PC-9 (cell line): ENCODE measurements at regions of chr1 and their contacts with region 1.

Region 1: GRCh38 chr1:236111527-236112343 is 30.6 kb upstream of the GPR137B start:
- DNase-seq: no peak
- H3K4me3 ChIP-seq: no peak overlapping the region
- H3K27ac ChIP-seq: no peak overlapping the region
- H3K4me1 ChIP-seq: 0 out of 2 replicates have a peak, but pooled peaks cover 4% of the 10 kb centered on the region
- H3K27me3 ChIP-seq: no peaks in the 10 kb centered on the region
- CTCF ChIP-seq: no peak

Region 2: GRCh38 chr1:236141305-236141929 is 29.7 kb after region 1 on chr1:
- CTCF ChIA-PET with region 1: interaction called, 17 read pairs
- POLR2A ChIA-PET with region 1: no interaction called
- intact Hi-C with region 1: no loop called
- DNase-seq: no peak
- H3K4me3 ChIP-seq: no peak overlapping the region
- H3K27ac ChIP-seq: no peak overlapping the region
- H3K4me1 ChIP-seq: no peaks in the 10 kb centered on the region
- H3K27me3 ChIP-seq: peaks cover 45% of the 10 kb centered on the region
- CTCF ChIP-seq: no peak

Region 3: DNA sequence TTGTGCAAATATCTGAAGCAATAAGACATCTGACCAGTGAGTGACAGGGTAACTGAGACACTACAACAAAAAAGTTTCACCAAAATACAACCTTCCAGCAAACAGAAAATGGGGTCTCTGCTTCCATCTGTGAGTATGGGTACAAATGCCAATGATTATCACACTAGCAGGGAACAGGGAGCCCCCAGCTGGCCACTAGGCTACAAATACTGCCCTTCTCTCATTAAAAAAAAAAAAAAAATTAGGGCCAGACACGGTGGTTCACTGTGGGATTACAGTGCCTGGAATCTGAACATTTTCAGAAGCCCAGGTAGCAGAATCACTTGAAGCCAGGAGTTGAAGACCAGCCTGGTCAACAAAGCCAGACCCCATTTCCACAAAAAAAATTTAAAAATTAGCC is 234.0 kb after region 1 on chr1:
- CTCF ChIA-PET with region 1: no interaction called
- POLR2A ChIA-PET with region 1: no interaction called
- intact Hi-C with region 1: no loop called
- DNase-seq: no peak
- H3K4me3 ChIP-seq: no peak overlapping the region
- H3K27ac ChIP-seq: no peak overlapping the region
- H3K4me1 ChIP-seq: peaks cover 7% of the 10 kb centered on the region; the same call in 1 of the 2 replicates
- H3K27me3 ChIP-seq: no peaks in the 10 kb centered on the region
- CTCF ChIP-seq: 0 out of 2 replicates have a peak, but pooled peaks have one; percentile 15